Activated CD8-positive, alpha-beta T cell treated with anti-CD3 and anti-CD28 coated beads, Interleukin-2, amount 10 ng/mL, durations not matched to agents 7 days and 5 days (primary cell): ENCODE measurements at regions of chr9 and their contacts with region 1.

Region 1: DNA sequence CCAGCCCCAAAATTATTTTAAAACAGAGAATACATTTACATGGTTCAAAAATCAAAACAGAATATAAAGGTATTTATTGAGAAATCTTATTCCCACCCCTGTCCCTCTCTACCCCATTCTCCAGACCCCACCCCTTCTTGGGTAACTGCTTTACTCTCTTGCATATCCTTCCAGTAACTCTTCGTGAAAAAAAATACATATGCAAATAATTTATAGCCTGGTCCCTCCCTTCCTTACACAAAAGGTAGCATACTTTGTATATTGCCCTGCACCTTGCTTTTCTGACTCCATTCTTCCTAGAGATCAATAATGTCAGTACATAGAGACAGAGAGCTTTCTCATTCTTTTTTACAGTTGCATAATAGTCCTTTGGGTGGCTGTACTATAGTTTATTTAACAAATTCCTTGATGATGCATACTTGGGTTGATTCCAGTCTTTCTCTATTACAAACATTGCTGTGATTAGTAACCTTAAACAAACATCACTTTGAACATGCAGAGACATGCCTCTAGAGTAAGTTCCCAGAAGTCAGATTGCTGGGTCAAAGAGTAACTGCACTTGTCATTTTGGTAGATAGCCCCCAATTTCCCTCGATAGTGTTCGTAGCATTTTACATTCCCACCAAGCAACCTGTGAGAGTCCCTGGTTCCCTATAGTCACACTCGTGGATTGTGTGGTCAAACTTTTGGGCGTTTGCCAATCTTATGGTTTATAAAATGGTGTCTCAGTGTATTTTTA is 47.8 kb downstream of the STOM start:
- DNase-seq: no peak
- ATAC-seq: no peak
- H3K4me3 Mint-ChIP-seq: no peak overlapping the region
- H3K27ac Mint-ChIP-seq: peak overlapping the region; percentile 50
- H3K4me1 Mint-ChIP-seq: peaks cover 34% of the 10 kb centered on the region
- H3K27me3 Mint-ChIP-seq: no peaks in the 10 kb centered on the region

Region 2: GRCh38 chr9:121213136-121213806 is 108.9 kb before region 1 on chr9:
- CTCF ChIA-PET with region 1: interaction called, 78 read pairs
- POLR2A ChIA-PET with region 1: no interaction called
- DNase-seq: peak; percentile 77
- ATAC-seq: peak; percentile 70
- H3K4me3 Mint-ChIP-seq: no peak overlapping the region
- H3K27ac Mint-ChIP-seq: no peak overlapping the region
- H3K4me1 Mint-ChIP-seq: peaks cover 22% of the 10 kb centered on the region
- H3K27me3 Mint-ChIP-seq: no peaks in the 10 kb centered on the region

Region 3: DNA sequence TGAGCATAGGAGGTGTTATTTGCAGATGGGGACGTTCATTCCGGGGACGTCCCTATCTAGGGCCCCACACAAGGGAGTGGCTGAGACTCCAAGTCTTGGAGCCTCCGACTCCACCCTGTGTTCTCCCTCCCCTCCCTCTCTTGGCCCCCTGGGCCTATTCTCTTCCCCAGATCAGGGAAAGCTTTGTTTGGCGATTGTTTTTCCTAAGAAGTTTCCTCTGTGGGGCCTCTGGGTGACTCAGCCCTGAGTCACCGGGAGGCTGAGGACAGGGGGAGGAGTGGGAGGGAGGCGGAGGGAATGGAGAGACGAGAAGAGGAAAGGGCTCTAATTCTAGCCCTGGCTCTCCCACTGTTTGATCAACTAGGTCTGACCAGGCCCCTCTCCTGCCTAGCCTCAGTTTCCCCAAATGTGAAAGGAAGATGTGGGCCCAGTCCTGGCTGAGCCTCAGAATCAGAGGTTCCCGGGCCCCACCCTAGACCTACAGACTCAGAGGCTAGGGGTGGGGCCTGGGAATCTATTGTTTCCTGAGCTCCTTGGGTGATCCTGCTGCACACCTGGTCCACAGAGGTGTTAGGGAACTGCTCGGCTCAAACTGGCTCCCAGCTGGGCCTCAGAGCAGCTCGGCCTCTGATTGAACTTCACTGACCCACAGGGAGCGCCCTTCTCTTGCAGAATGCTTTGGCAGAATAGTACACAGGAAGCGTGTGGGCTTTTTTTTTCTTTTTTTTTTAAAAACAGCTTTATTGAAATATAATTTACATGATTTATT is 35.0 kb before region 1 on chr9:
- CTCF ChIA-PET with region 1: interaction called, 16 read pairs
- POLR2A ChIA-PET with region 1: no interaction called
- DNase-seq: no peak
- ATAC-seq: no peak
- H3K4me3 Mint-ChIP-seq: no peak overlapping the region
- H3K27ac Mint-ChIP-seq: no peak overlapping the region
- H3K4me1 Mint-ChIP-seq: peaks cover 13% of the 10 kb centered on the region
- H3K27me3 Mint-ChIP-seq: no peaks in the 10 kb centered on the region

Region 4: GRCh38 chr9:121308765-121309164 is 13.4 kb before region 1 on chr9:
- CTCF ChIA-PET with region 1: interaction called, 18 read pairs
- POLR2A ChIA-PET with region 1: no interaction called
- DNase-seq: no peak
- ATAC-seq: no peak
- H3K4me3 Mint-ChIP-seq: no peak overlapping the region
- H3K27ac Mint-ChIP-seq: no peak overlapping the region
- H3K4me1 Mint-ChIP-seq: no peaks in the 10 kb centered on the region
- H3K27me3 Mint-ChIP-seq: no peaks in the 10 kb centered on the region

Region 5: DNA sequence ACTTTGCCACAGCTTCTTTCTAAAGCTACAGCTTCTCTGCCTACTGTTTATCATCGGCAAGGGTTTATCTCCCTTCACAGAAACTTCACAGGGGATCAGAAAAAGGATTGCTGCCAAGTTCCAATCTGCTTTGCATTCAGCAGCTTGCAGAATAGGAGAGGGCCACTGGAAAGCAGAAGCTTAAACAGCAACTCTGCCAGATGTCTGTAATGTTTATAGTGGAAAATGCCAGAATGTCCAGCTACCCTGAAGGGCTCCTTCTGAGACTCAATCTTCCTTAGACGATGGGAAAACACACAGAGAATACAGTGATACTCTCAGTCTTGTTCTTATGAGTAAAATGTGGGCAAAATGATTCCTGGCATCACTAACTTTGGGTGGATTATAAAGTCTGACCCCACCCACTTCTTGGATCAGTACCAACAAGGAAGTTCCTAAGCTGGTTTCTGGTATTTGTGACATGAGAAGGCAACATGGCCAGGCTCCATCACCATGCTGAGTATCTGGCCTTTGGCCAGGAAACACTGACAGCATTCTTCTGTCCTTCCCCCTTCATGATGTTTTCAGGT is 28.9 kb after region 1 on chr9:
- CTCF ChIA-PET with region 1: interaction called, 31 read pairs
- POLR2A ChIA-PET with region 1: interaction called, 7 read pairs
- DNase-seq: peak; percentile 17
- ATAC-seq: no peak
- H3K4me3 Mint-ChIP-seq: no peak overlapping the region
- H3K27ac Mint-ChIP-seq: no peak overlapping the region
- H3K4me1 Mint-ChIP-seq: peaks cover 41% of the 10 kb centered on the region
- H3K27me3 Mint-ChIP-seq: no peaks in the 10 kb centered on the region

Region 6: DNA sequence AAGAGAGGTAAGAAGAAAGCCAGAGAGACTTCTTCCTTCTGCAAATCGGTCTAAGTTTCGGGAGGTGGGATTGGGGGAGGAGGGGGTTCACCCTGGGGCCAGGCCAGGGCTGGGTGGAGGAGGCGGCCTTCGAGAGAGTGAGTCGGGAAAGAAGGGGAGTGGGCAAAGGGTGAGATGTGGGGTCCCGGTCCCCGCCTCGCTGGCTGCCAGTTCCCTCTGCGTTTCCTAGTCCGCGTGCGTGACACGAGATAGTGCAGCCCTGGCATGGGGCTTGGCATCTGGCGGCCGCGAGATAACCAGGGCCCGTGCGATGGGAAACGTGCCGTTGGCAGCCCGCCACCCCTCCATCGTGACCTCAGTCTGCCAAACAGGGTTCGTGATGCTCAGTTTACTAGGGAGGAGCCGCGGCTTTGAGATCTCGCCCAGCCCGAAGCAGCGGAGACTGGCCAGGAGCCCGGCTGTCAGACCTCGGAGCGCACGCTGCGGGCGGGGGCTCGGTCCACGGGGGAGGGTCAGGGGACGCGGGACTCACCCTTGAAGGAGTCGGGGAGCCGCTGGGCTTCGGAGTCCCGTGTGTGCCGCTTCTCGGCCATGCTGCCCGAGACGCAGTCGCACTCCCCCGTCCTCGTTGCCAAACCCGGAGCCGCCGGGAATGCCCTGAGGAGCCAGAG is 47.5 kb after region 1 on chr9 and contains the start of gene STOM:
- CTCF ChIA-PET with region 1: interaction called, 225 read pairs
- POLR2A ChIA-PET with region 1: no interaction called
- DNase-seq: peak; percentile 72
- ATAC-seq: peak; percentile 79
- H3K4me3 Mint-ChIP-seq: peak within 1 kb of the TSS; percentile 87
- H3K27ac Mint-ChIP-seq: peak within 1 kb of the TSS; percentile 93
- H3K4me1 Mint-ChIP-seq: peaks cover 64% of the 10 kb centered on the region
- H3K27me3 Mint-ChIP-seq: no peaks in the 10 kb centered on the region
- total RNA-seq, gene STOM: 50.7 to 54.9 TPM

Region 7: DNA sequence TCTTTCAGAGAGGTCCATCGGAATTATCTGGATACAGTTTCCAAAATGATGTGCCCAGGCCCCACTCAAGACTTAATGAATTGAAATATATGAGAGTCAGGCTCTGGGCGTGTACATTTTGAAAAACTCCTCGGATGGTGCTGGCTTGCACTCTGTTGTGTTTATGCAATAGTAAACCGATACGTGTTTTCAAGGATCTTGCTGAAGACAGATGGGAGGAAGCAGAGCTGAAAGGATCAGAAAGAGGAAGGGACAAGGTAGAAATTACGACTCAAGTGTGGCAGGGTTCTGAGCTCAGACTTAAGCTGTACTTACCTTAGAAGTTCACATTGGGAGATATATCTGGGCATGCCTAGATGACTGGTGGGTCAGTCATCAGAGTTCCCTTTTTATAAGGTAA is 61.5 kb after region 1 on chr9:
- CTCF ChIA-PET with region 1: interaction called, 225 read pairs
- POLR2A ChIA-PET with region 1: no interaction called
- DNase-seq: no peak
- ATAC-seq: no peak
- H3K4me3 Mint-ChIP-seq: no peak overlapping the region
- H3K27ac Mint-ChIP-seq: no peak overlapping the region
- H3K4me1 Mint-ChIP-seq: no peaks in the 10 kb centered on the region
- H3K27me3 Mint-ChIP-seq: peaks cover 19% of the 10 kb centered on the region